Breast epithelium (tissue), 4 donors: ENCODE measurements at regions of chr20 and their contacts with region 1.

Region 1: DNA sequence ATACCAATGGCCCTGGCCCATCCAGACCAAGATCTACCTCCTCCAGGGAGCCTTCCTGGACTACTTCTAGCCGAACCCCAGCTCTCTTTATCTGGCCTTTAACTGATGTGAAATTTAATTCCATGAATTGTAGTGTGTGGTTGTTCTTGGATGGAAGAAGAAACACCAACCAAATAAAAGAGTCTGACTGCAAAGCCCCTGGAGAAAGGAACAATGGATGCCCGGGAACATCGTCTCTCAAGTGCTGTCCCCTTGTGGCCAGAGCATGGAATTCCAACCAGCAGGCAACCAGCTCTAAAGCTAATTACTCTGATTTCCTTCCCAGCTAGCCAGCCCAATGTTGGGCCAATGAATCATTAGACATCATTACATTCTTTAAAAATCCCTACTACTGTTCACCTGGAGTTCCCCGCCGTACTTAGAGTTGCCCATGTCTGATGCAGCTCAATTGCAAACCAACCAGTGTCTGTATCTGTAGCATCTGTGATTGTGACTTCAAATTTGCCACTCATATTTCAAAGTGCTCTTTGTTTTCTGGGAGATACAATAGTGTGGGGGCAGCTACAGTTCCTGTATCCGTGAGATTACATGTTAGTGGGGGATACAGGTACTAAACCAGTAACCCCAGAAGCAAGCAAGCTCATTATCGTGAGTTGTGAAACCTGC is 141.1 kb downstream of the ANKRD60 start:
- DNase-seq: no peak
- H3K4me3 ChIP-seq: no peak overlapping the region
- H3K27ac ChIP-seq: no peak overlapping the region
- H3K4me1 ChIP-seq: no peaks in the 10 kb centered on the region
- H3K27me3 ChIP-seq: no peaks in the 10 kb centered on the region
- CTCF ChIP-seq: peak; percentile 70 to 83 (median 81)
- POLR2A ChIP-seq: no peak

Region 2: GRCh38 chr20:57661199-57662027 is 425.9 kb before region 1 on chr20:
- intact Hi-C with region 1: loop called (anchors 10 kb)
- DNase-seq: peak; percentile 15 to 27
- H3K4me3 ChIP-seq: no peak overlapping the region
- H3K27ac ChIP-seq: peak overlapping the region in 1 of 2 donors; percentile 43
- H3K4me1 ChIP-seq: peaks cover 0 to 3% of the 10 kb centered on the region in 2 donors
- H3K27me3 ChIP-seq: no peaks in the 10 kb centered on the region
- CTCF ChIP-seq: no peak
- POLR2A ChIP-seq: no peak

Region 3: GRCh38 chr20:58109126-58109880 is 22.0 kb after region 1 on chr20:
- intact Hi-C with region 1: loop called (anchors 1 kb)
- DNase-seq: no peak
- H3K4me3 ChIP-seq: no peak overlapping the region
- H3K27ac ChIP-seq: no peak overlapping the region
- H3K4me1 ChIP-seq: no peaks in the 10 kb centered on the region
- H3K27me3 ChIP-seq: no peaks in the 10 kb centered on the region
- CTCF ChIP-seq: no peak
- POLR2A ChIP-seq: no peak

Region 4: GRCh38 chr20:58179432-58180099 is 92.2 kb after region 1 on chr20:
- intact Hi-C with region 1: no loop called
- DNase-seq: no peak
- H3K4me3 ChIP-seq: peak overlapping the region; percentile 6 to 59 (median 31)
- H3K27ac ChIP-seq: no peak overlapping the region
- H3K4me1 ChIP-seq: peaks cover 0 to 8% of the 10 kb centered on the region in 2 donors
- H3K27me3 ChIP-seq: no peaks in the 10 kb centered on the region
- CTCF ChIP-seq: peak; percentile 85 to 97 (median 94)
- POLR2A ChIP-seq: no peak